ENCODE measurements at regions of chr1 and their contacts with region 1.

Region 1: GRCh38 chr1:93807307-93807930 is 71.6 kb downstream of the DNTTIP2 start:
- DNase-seq: no peak

Region 2: GRCh38 chr1:93779540-93780192 is 27.8 kb before region 1 on chr1:
- intact Hi-C with region 1: loop called (anchors 2 kb)
- DNase-seq: no peak